Spleen (tissue), 13 donors: ENCODE measurements at regions of chr3 and their contacts with region 1.

Region 1: GRCh38 chr3:20013396-20013795 is 1.3 kb upstream of the PP2D1 start:
- DNase-seq: no peak
- H3K4me3 ChIP-seq: no peak overlapping the region
- H3K27ac ChIP-seq: no peak overlapping the region
- H3K4me1 ChIP-seq: no peaks in the 10 kb centered on the region
- H3K27me3 ChIP-seq: no peaks in the 10 kb centered on the region
- CTCF ChIP-seq: no peak
- POLR2A ChIP-seq: no peak

Region 2: DNA sequence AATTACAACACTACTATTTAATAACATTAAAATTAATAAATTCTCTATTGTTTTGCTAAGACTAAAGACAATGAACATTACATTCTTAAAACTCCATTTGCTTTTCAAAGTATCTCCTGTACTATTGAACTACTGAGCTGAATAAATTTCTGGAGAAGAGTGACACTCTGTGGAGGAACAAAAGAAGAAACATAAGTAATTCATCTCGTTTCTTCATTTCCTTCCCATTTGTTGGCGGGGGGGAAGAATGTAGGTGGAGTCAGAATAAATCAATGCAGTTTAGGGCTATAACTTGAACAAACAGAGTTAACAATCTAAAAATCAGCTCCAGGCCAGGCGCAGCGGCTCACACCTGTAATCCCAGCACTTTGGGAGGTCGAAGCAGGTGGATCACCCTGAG is 112.1 kb before region 1 on chr3:
- intact Hi-C with region 1: no loop called
- DNase-seq: no peak
- H3K4me3 ChIP-seq: no peak overlapping the region
- H3K27ac ChIP-seq: peak overlapping the region in 4 of 8 donors; percentile 45 to 81 (median 73)
- H3K4me1 ChIP-seq: peaks cover 0 to 14% (median 0%) of the 10 kb centered on the region in 6 donors
- H3K27me3 ChIP-seq: no peaks in the 10 kb centered on the region
- CTCF ChIP-seq: no peak
- POLR2A ChIP-seq: no peak

Region 3: DNA sequence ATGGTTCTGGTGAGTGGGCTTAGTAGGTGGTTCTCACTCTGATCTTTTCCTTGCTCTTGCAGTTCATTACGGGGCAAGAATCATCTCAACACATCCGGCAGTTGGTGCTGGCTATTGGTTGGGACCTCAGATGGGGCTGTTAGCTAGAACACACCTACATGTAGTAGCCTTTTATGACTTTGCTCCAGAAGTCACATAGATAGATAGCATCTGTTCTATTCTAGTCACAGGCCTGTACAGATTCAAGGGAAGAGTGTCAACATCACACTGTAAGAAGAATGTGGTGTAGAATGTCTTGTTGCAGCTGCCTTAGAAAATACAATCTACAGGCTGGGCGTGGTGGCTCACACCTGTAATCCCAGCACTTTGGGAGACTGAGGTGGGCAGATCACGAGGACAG is 51.4 kb before region 1 on chr3:
- intact Hi-C with region 1: loop called (anchors 10 kb)
- DNase-seq: no peak
- H3K4me3 ChIP-seq: no peak overlapping the region
- H3K27ac ChIP-seq: no peak overlapping the region
- H3K4me1 ChIP-seq: peaks cover under 1 to 95% (median 26%) of the 10 kb centered on the region in 6 donors
- H3K27me3 ChIP-seq: no peaks in the 10 kb centered on the region
- CTCF ChIP-seq: no peak
- POLR2A ChIP-seq: no peak